ENCODE measurements at regions of chr20 and their contacts with region 1.

Region 1: DNA sequence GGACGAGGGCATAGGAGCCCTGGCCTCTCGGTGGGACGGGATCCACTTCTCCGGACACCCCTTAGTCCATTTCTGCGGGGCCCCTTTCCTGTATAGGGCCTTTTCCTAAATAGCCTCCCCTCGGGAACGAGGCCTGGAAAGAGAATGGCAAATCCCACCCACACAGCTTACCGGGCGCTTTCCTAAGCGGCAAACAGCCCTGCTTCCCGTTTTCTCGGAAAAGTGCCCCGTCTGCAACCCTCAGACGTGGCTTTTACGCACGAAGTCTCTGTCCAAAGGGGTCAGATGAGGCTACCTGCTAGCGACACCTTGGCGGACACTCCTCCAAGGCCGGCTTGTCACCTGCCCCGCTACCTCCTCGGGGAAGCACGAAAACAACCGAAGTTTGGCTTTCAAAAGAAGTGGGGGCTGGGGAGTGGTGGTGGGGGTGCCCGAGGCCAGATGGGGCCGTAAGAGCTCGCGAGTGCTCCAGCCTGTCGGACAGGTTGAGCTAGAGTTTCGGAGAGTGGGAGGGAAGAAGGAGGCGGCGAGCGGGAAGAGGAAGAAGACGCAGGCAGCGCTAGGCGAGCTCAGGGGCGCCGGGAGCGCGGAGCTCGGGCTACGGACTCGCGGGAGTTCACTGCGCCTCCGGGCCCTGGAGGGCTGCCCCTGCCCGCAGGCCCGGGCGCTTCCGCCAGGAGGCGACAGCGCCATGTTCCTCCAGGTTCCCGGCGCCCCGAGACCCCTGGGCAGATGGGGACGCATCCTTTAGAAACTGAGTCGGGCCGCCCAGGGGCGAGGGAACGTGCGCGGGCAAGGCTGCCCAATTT is 768 bp downstream of the TFAP2C start:
- DNase-seq: peak; percentile 85
- ATAC-seq: peak; percentile 61
- H3K4me3 Mint-ChIP-seq: peak overlapping the region; percentile 83
- H3K27ac Mint-ChIP-seq: no peak overlapping the region
- H3K4me1 Mint-ChIP-seq: peaks cover 49% of the 10 kb centered on the region
- H3K27me3 Mint-ChIP-seq: peaks cover 70% of the 10 kb centered on the region
- CTCF ChIP-seq: peak; percentile 81

Region 2: GRCh38 chr20:56483944-56484343 is 145.9 kb before region 1 on chr20:
- CTCF ChIA-PET with region 1: no interaction called
- POLR2A ChIA-PET with region 1: no interaction called
- DNase-seq: no peak
- ATAC-seq: no peak
- H3K4me3 Mint-ChIP-seq: no peak overlapping the region
- H3K27ac Mint-ChIP-seq: no peak overlapping the region
- H3K4me1 Mint-ChIP-seq: no peaks in the 10 kb centered on the region
- H3K27me3 Mint-ChIP-seq: no peaks in the 10 kb centered on the region
- CTCF ChIP-seq: no peak

Region 3: DNA sequence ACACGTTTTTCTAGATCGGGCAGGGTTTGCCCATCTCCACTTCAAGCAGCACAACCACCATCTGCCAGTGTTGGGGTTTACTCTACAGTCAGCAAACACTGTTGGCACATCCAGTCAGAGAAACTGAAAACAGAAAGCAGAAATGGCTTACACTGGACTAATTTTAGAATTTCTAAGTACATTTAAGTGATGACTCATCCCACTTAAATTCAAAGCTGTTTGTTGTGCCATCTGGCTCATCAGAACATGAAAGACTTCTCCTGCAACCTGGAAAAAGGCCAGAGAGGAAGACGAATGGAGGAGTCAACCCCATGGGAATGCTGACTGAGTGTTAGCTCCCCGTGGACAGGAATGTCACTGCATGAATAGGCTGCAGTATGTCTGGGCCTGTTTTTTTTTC is 75.0 kb before region 1 on chr20:
- CTCF ChIA-PET with region 1: interaction called, 10 read pairs
- POLR2A ChIA-PET with region 1: no interaction called
- DNase-seq: no peak
- ATAC-seq: peak; percentile 73
- H3K4me3 Mint-ChIP-seq: no peak overlapping the region
- H3K27ac Mint-ChIP-seq: peak overlapping the region; percentile 9; the same call in 1 of the 2 replicates
- H3K4me1 Mint-ChIP-seq: peaks cover 8% of the 10 kb centered on the region
- H3K27me3 Mint-ChIP-seq: no peaks in the 10 kb centered on the region
- CTCF ChIP-seq: no peak

Region 4: DNA sequence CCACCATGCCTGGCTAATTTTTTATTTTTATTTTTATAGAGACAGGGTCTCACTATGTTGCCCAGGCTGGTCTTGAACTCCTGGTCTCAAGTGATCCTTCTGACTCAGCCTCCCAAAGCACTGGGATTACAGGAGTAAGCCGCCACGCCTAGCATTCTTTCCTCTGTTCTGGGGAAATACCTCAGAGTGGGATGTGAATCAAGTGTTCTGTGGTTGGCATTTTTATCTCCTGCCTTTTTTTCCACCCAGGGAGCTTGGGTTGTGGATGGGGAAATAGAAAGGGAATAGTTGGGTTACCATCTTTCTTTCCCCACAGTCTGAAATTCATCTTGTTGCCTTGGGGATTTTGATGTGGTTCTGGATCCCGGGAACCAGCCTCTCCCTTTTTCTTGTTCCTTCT is 23.3 kb after region 1 on chr20:
- CTCF ChIA-PET with region 1: interaction called, 10 read pairs
- POLR2A ChIA-PET with region 1: interaction called, 3 read pairs
- DNase-seq: no peak
- ATAC-seq: no peak
- H3K4me3 Mint-ChIP-seq: no peak overlapping the region
- H3K27ac Mint-ChIP-seq: peak overlapping the region; percentile 11; the same call in 1 of the 2 replicates
- H3K4me1 Mint-ChIP-seq: no peaks in the 10 kb centered on the region
- H3K27me3 Mint-ChIP-seq: no peaks in the 10 kb centered on the region
- CTCF ChIP-seq: no peak

Region 5: GRCh38 chr20:56664791-56665190 is 34.9 kb after region 1 on chr20:
- CTCF ChIA-PET with region 1: no interaction called
- POLR2A ChIA-PET with region 1: no interaction called
- DNase-seq: no peak
- ATAC-seq: no peak
- H3K4me3 Mint-ChIP-seq: no peak overlapping the region
- H3K27ac Mint-ChIP-seq: no peak overlapping the region
- H3K4me1 Mint-ChIP-seq: no peaks in the 10 kb centered on the region
- H3K27me3 Mint-ChIP-seq: no peaks in the 10 kb centered on the region
- CTCF ChIP-seq: no peak

Region 6: DNA sequence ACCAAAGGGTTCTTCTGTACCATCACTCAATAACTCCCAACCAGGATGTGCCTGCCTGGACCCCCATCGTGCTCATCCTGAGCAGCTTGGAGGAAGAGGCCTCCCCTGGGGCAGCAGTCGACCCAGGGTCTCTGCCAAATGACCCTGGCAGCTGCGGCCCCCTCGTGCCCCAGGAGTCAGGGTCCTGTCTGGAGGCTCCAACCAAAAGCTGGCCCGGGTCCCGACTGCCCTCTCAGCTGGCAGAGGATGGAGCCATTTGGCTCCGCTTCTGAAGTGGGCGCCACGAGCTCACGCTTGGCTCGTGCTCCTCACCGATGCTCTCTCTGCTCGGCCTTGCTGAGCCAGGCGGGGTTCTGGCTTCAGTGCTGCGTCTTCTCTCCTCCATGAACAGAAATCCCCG is 56.0 kb after region 1 on chr20:
- CTCF ChIA-PET with region 1: interaction called, 11 read pairs
- POLR2A ChIA-PET with region 1: no interaction called
- DNase-seq: peak; percentile 18
- ATAC-seq: peak; percentile 22; the same call in 1 of the 2 replicates
- H3K4me3 Mint-ChIP-seq: no peak overlapping the region
- H3K27ac Mint-ChIP-seq: no peak overlapping the region
- H3K4me1 Mint-ChIP-seq: peaks cover 31% of the 10 kb centered on the region
- H3K27me3 Mint-ChIP-seq: no peaks in the 10 kb centered on the region; the same call in 1 of the 2 replicates
- CTCF ChIP-seq: no peak

Region 7: GRCh38 chr20:56735191-56735711 is 105.4 kb after region 1 on chr20:
- CTCF ChIA-PET with region 1: interaction called, 15 read pairs
- POLR2A ChIA-PET with region 1: no interaction called
- DNase-seq: peak; percentile 24
- ATAC-seq: no peak
- H3K4me3 Mint-ChIP-seq: peak overlapping the region; percentile 51
- H3K27ac Mint-ChIP-seq: peak overlapping the region; percentile 91
- H3K4me1 Mint-ChIP-seq: peaks cover 74% of the 10 kb centered on the region
- H3K27me3 Mint-ChIP-seq: peaks cover 64% of the 10 kb centered on the region
- CTCF ChIP-seq: no peak

Region 8: DNA sequence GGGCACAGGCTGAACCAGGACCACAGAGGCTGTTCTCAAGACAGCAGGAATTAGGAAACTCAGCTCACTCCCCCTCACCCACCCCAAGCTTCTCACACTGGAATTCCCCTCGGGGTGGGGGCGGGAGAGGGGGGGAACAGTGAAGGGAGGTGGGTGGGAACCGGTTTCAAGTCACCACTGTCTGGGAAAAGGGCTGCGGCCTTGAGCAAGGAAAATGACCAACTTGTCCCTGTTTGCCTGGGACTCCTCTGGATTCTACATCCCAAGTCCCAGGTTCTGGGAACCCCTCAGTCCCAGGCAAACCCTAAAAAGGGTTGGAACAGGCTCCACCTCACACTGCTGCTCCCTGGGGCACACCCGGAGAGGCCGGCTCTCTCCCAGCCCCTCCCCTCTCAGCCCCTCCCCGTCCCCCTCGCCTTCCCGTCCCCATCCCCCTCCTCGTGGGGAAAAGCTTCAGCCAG is 230.0 kb after region 1 on chr20:
- CTCF ChIA-PET with region 1: interaction called, 12 read pairs
- POLR2A ChIA-PET with region 1: no interaction called
- DNase-seq: peak; percentile 40
- ATAC-seq: peak; percentile 89
- H3K4me3 Mint-ChIP-seq: peak overlapping the region; percentile 49
- H3K27ac Mint-ChIP-seq: no peak overlapping the region
- H3K4me1 Mint-ChIP-seq: peaks cover 41% of the 10 kb centered on the region
- H3K27me3 Mint-ChIP-seq: peaks cover 20% of the 10 kb centered on the region
- CTCF ChIP-seq: no peak